ENCODE measurements at regions of chr2 and their contacts with region 1.

Region 1: GRCh38 chr2:119943058-119943457 is 69.8 kb upstream of the EPB41L5 start:
- DNase-seq: no peak
- ATAC-seq: peak; percentile 65 to 74 (median 66)
- H3K4me3 ChIP-seq: no peak overlapping the region
- H3K4me3 Mint-ChIP-seq: peak overlapping the region; percentile 64
- H3K27ac ChIP-seq: peak overlapping the region; percentile 24
- H3K27ac Mint-ChIP-seq: peak overlapping the region; percentile 83 to 97
- H3K4me1 ChIP-seq: peaks cover 21% of the 10 kb centered on the region
- H3K4me1 Mint-ChIP-seq: peaks cover 76 to 80% of the 10 kb centered on the region in 2 donors
- H3K27me3 ChIP-seq: no peaks in the 10 kb centered on the region
- H3K27me3 Mint-ChIP-seq: no peaks in the 10 kb centered on the region
- CTCF ChIP-seq: no peak

Region 2: GRCh38 chr2:119759451-119760236 is 183.4 kb before region 1 on chr2 and contains the start of gene PTPN4:
- intact Hi-C with region 1: loop called (anchors 5 kb)
- DNase-seq: peak; percentile 87 to 99
- ATAC-seq: peak; percentile 90 to 98 (median 90)
- H3K4me3 ChIP-seq: peak within 1 kb of the TSS; percentile 95
- H3K4me3 Mint-ChIP-seq: peak within 1 kb of the TSS; percentile 84
- H3K27ac ChIP-seq: peak within 1 kb of the TSS; percentile 92
- H3K27ac Mint-ChIP-seq: peak within 1 kb of the TSS; percentile 35 to 99
- H3K4me1 ChIP-seq: peaks cover 11% of the 10 kb centered on the region
- H3K4me1 Mint-ChIP-seq: peaks cover 47 to 49% of the 10 kb centered on the region in 2 donors
- H3K27me3 ChIP-seq: no peaks in the 10 kb centered on the region
- H3K27me3 Mint-ChIP-seq: no peaks in the 10 kb centered on the region
- CTCF ChIP-seq: no peak
- total RNA-seq, gene PTPN4: 265 to 347 (median 283) TPM

Region 3: DNA sequence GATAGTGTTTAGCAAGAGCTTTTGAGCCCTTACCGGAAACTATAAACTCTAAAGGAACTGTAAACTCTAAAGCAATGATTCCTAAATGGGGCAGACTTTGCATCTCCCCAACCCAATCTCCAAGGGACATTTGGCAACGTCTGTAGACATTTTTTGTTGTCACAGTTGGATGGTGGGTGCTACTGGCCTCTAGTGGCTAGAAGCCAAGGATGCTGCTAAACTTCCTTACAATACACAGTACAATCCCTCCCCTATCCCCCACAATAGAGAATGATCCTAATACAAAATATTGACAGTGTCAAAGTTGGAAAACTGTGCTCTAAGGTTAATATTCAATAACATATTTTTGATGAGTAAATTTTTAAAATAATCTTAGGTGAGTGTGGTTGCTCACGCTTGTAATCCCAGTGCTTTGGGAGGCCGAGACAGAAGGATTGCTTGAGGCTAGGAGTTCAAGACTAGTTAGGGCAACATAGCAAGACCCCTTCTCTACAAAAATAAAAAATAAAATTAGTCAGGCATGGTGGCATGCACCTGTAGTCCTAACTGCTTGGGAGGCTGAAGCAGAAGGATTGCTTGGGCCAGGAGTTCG is 116.6 kb before region 1 on chr2:
- intact Hi-C with region 1: loop called (anchors 5 kb)
- DNase-seq: peak in 1 of 2 donors; percentile 72
- ATAC-seq: peak; percentile 70 to 84 (median 76)
- H3K4me3 ChIP-seq: no peak overlapping the region
- H3K4me3 Mint-ChIP-seq: no peak overlapping the region
- H3K27ac ChIP-seq: no peak overlapping the region
- H3K27ac Mint-ChIP-seq: no peak overlapping the region
- H3K4me1 ChIP-seq: no peaks in the 10 kb centered on the region
- H3K4me1 Mint-ChIP-seq: peaks cover 37 to 59% of the 10 kb centered on the region in 2 donors
- H3K27me3 ChIP-seq: no peaks in the 10 kb centered on the region
- H3K27me3 Mint-ChIP-seq: no peaks in the 10 kb centered on the region
- CTCF ChIP-seq: peak; percentile 74

Region 4: GRCh38 chr2:119862127-119862889 is 80.8 kb before region 1 on chr2:
- intact Hi-C with region 1: loop called (anchors 5 kb)
- DNase-seq: peak in 1 of 2 donors; percentile 34
- ATAC-seq: peak; percentile 71 to 81 (median 76)
- H3K4me3 ChIP-seq: no peak overlapping the region
- H3K4me3 Mint-ChIP-seq: peak overlapping the region; percentile 45
- H3K27ac ChIP-seq: peak overlapping the region; percentile 38
- H3K27ac Mint-ChIP-seq: peak overlapping the region; percentile 77 to 85
- H3K4me1 ChIP-seq: no peaks in the 10 kb centered on the region
- H3K4me1 Mint-ChIP-seq: peaks cover 60 to 62% of the 10 kb centered on the region in 2 donors
- H3K27me3 ChIP-seq: no peaks in the 10 kb centered on the region
- H3K27me3 Mint-ChIP-seq: no peaks in the 10 kb centered on the region
- CTCF ChIP-seq: no peak

Region 5: GRCh38 chr2:119960821-119961220 is 17.8 kb after region 1 on chr2:
- intact Hi-C with region 1: loop called (anchors 2 kb)
- DNase-seq: no peak
- ATAC-seq: peak in 2 of 3 donors; percentile 35 to 42
- H3K4me3 ChIP-seq: no peak overlapping the region
- H3K4me3 Mint-ChIP-seq: peak overlapping the region; percentile 42
- H3K27ac ChIP-seq: no peak overlapping the region
- H3K27ac Mint-ChIP-seq: peak overlapping the region; percentile 62 to 70
- H3K4me1 ChIP-seq: no peaks in the 10 kb centered on the region
- H3K4me1 Mint-ChIP-seq: peaks cover 49 to 52% of the 10 kb centered on the region in 2 donors
- H3K27me3 ChIP-seq: no peaks in the 10 kb centered on the region
- H3K27me3 Mint-ChIP-seq: no peaks in the 10 kb centered on the region
- CTCF ChIP-seq: no peak

Region 6: GRCh38 chr2:120167272-120167671 is 224.2 kb after region 1 on chr2:
- intact Hi-C with region 1: no loop called
- DNase-seq: no peak
- ATAC-seq: no peak
- H3K4me3 ChIP-seq: no peak overlapping the region
- H3K4me3 Mint-ChIP-seq: no peak overlapping the region
- H3K27ac ChIP-seq: no peak overlapping the region
- H3K27ac Mint-ChIP-seq: no peak overlapping the region
- H3K4me1 ChIP-seq: no peaks in the 10 kb centered on the region
- H3K4me1 Mint-ChIP-seq: no peaks in the 10 kb centered on the region
- H3K27me3 ChIP-seq: no peaks in the 10 kb centered on the region
- H3K27me3 Mint-ChIP-seq: peaks cover 0 to 4% of the 10 kb centered on the region in 2 donors
- CTCF ChIP-seq: no peak

Region 7: DNA sequence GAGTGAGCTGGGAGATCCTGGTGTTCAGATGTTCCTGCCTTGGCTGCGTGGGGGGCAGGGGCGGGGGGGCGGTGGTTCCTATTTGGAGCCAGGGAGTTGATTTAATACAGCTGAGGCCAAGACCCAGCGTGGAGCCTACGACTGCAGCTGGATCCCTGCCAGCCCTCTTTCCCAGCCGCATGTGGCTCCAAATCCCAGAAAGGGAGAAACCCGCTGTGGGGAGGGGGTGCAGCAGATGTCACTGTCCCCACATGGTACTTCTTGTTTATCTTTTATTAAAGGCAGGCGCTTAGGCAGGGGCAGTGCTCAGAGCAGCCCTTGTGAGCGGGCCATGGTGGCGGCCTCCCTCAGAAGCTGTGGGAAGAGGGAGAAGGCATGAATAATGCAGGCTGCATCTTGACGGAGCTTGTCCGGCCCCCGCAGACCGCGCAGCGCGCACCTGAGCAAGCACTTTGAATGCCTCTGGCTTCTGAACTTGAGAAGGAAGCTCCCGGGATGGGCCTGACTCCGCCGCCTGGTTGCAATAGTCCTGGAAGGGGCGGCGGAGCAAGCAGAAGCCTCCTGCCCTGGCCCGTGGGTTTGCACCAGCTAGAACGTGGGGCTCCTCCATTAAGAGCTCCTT is 904.8 kb after region 1 on chr2:
- intact Hi-C with region 1: no loop called
- DNase-seq: no peak
- ATAC-seq: no peak
- H3K4me3 ChIP-seq: no peak overlapping the region
- H3K4me3 Mint-ChIP-seq: no peak overlapping the region
- H3K27ac ChIP-seq: no peak overlapping the region
- H3K27ac Mint-ChIP-seq: no peak overlapping the region
- H3K4me1 ChIP-seq: no peaks in the 10 kb centered on the region
- H3K4me1 Mint-ChIP-seq: no peaks in the 10 kb centered on the region
- H3K27me3 ChIP-seq: no peaks in the 10 kb centered on the region
- H3K27me3 Mint-ChIP-seq: peaks cover 0 to 5% of the 10 kb centered on the region in 2 donors
- CTCF ChIP-seq: no peak

Region 8: GRCh38 chr2:121038891-121039616 is 1096.0 kb after region 1 on chr2:
- intact Hi-C with region 1: no loop called
- DNase-seq: no peak
- ATAC-seq: no peak
- H3K4me3 ChIP-seq: no peak overlapping the region
- H3K4me3 Mint-ChIP-seq: no peak overlapping the region
- H3K27ac ChIP-seq: no peak overlapping the region
- H3K27ac Mint-ChIP-seq: no peak overlapping the region
- H3K4me1 ChIP-seq: no peaks in the 10 kb centered on the region
- H3K4me1 Mint-ChIP-seq: no peaks in the 10 kb centered on the region
- H3K27me3 ChIP-seq: no peaks in the 10 kb centered on the region
- H3K27me3 Mint-ChIP-seq: peaks cover 0 to 6% of the 10 kb centered on the region in 2 donors
- CTCF ChIP-seq: no peak

Region 9: GRCh38 chr2:121398853-121399252 is 1455.8 kb after region 1 on chr2:
- intact Hi-C with region 1: no loop called
- DNase-seq: no peak
- ATAC-seq: no peak
- H3K4me3 ChIP-seq: no peak overlapping the region
- H3K4me3 Mint-ChIP-seq: no peak overlapping the region
- H3K27ac ChIP-seq: no peak overlapping the region
- H3K27ac Mint-ChIP-seq: peak overlapping the region in 1 of 2 donors; percentile 32
- H3K4me1 ChIP-seq: no peaks in the 10 kb centered on the region
- H3K4me1 Mint-ChIP-seq: peaks cover 0 to 7% of the 10 kb centered on the region in 2 donors
- H3K27me3 ChIP-seq: no peaks in the 10 kb centered on the region
- H3K27me3 Mint-ChIP-seq: no peaks in the 10 kb centered on the region
- CTCF ChIP-seq: no peak

Measured in natural killer cell (primary cell).